Activated naive CD4-positive, alpha-beta T cell treated with anti-CD3 and anti-CD28 coated beads, Interleukin-2, amount 10 ng/mL, durations not matched to agents 7 days and 5 days (primary cell): ENCODE measurements at regions of chr17 and their contacts with region 1.

Region 1: GRCh38 chr17:50783193-50783660 is 15.9 kb upstream of the ANKRD40CL start:
- DNase-seq: peak; percentile 84
- H3K4me3 Mint-ChIP-seq: no peak overlapping the region
- H3K27ac Mint-ChIP-seq: no peak overlapping the region
- H3K4me1 Mint-ChIP-seq: peaks cover 33% of the 10 kb centered on the region
- H3K27me3 Mint-ChIP-seq: peaks cover 77% of the 10 kb centered on the region

Region 2: DNA sequence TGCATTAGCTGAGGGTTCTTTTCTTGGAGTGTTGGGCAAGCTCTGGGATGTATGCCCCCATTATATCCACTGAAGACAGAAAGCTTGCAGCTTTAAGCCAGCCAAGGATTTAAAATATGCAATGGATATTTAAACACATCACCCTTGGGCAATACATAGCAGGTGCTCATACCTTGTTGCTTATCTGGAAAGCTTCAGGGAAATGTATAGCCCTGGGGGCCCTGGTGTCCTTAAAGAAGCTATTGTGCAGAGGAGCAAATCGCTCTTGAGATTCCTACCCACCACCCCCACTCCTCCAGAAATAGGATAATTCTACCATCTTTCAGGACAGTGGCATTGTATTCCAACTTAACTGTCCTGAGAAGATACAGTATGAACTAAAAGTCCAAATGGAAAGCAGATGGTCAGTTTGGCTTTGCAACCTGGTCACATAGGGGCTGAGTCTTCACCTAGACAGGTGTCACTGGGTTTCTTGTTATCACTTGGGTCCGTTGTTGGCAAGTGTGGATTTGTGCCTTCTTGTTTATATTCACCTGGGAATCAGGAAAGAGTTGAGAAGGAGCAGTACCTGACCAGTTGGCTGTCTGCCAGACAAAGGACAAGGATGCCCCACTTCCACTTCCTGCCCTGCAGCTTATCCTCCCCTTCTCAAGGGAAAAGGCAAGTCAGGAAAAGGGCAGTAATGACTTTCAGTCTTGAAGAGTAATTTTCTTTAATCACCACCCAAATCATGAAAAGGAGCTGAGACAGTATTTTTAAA is 19.3 kb before region 1 on chr17:
- CTCF ChIA-PET with region 1: interaction called, 24 read pairs
- DNase-seq: no peak
- H3K4me3 Mint-ChIP-seq: no peak overlapping the region
- H3K27ac Mint-ChIP-seq: no peak overlapping the region
- H3K4me1 Mint-ChIP-seq: peaks cover 8% of the 10 kb centered on the region
- H3K27me3 Mint-ChIP-seq: peaks cover 50% of the 10 kb centered on the region

Region 3: DNA sequence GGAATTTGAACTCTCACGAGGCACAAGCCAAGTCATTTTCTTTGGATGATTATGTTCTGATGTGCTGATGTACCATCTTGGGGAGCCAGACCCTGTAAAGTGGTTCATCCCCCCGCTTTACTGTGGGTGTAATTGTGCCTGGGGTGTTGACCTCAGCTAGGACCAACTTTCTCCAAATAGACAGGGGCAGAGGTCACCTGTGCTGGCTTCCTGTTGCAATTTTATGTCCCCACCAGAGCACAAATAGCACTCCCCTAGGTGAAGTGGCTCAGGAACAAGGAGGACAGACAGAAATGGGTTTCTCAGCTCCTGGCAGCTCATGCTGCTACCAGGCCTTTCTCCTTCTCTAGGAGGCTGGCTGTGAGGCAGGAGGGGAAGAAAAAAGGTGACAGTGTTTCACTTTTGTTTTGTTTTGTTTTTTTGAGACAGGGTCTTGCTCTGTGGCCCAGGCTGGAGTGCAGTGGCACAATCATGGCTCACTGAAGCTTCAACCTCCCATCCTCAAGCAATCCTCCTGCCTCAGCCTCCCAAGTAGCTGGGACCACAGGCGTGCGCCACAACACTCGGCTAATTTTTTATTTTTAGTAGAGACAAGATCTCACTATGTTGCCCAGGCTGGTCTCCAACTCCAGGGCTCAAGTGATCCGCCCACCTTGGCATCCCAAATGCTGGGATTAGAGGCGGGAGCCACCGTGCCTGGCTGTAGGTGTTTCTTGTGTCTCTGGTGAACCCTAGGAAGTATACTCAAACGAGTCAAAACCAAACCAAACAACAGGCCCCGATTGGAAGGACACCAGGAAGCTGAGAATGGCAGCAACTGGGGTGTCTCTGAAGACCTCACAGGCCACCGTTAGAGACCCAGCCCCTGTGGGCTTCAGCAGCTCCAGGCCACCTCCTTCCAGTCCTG is 19.6 kb after region 1 on chr17:
- CTCF ChIA-PET with region 1: interaction called, 10 read pairs
- DNase-seq: no peak
- H3K4me3 Mint-ChIP-seq: no peak overlapping the region
- H3K27ac Mint-ChIP-seq: no peak overlapping the region
- H3K4me1 Mint-ChIP-seq: no peaks in the 10 kb centered on the region
- H3K27me3 Mint-ChIP-seq: peaks cover 20% of the 10 kb centered on the region

Region 4: DNA sequence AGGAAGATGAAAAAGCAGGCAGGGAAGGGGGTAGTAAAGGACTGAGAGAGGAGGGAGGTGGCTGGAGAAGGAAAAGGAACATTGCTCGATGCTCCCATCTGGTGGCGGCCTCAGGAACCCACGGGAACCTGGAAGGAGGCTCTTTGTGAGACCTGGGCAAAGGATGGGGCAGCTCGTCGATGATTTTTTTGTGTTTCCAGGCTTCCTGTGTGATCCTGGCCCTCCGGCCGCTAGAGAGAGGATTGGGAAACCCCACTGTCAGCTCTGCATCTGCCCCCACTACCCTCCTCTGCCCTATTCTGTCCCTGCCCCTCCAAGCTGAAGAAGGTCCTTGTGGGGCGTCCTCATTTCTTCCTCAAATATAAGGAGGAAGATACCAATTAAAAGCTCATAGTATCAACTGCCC is 58.7 kb after region 1 on chr17:
- CTCF ChIA-PET with region 1: interaction called, 54 read pairs
- DNase-seq: peak; percentile 74
- H3K4me3 Mint-ChIP-seq: no peak overlapping the region
- H3K27ac Mint-ChIP-seq: no peak overlapping the region
- H3K4me1 Mint-ChIP-seq: no peaks in the 10 kb centered on the region
- H3K27me3 Mint-ChIP-seq: peaks cover 24% of the 10 kb centered on the region

Region 5: GRCh38 chr17:50949989-50950881 is 167.0 kb after region 1 on chr17:
- CTCF ChIA-PET with region 1: interaction called, 39 read pairs
- DNase-seq: peak; percentile 66
- H3K4me3 Mint-ChIP-seq: no peak overlapping the region
- H3K27ac Mint-ChIP-seq: no peak overlapping the region
- H3K4me1 Mint-ChIP-seq: peaks cover 53% of the 10 kb centered on the region
- H3K27me3 Mint-ChIP-seq: peaks cover 25% of the 10 kb centered on the region

Region 6: GRCh38 chr17:50956750-50957523 is 173.7 kb after region 1 on chr17:
- CTCF ChIA-PET with region 1: interaction called, 39 read pairs
- DNase-seq: peak; percentile 82
- H3K4me3 Mint-ChIP-seq: no peak overlapping the region
- H3K27ac Mint-ChIP-seq: no peak overlapping the region
- H3K4me1 Mint-ChIP-seq: peaks cover 20% of the 10 kb centered on the region
- H3K27me3 Mint-ChIP-seq: peaks cover 29% of the 10 kb centered on the region